ENCODE measurements at regions of chr4 and their contacts with region 1.

Region 1: DNA sequence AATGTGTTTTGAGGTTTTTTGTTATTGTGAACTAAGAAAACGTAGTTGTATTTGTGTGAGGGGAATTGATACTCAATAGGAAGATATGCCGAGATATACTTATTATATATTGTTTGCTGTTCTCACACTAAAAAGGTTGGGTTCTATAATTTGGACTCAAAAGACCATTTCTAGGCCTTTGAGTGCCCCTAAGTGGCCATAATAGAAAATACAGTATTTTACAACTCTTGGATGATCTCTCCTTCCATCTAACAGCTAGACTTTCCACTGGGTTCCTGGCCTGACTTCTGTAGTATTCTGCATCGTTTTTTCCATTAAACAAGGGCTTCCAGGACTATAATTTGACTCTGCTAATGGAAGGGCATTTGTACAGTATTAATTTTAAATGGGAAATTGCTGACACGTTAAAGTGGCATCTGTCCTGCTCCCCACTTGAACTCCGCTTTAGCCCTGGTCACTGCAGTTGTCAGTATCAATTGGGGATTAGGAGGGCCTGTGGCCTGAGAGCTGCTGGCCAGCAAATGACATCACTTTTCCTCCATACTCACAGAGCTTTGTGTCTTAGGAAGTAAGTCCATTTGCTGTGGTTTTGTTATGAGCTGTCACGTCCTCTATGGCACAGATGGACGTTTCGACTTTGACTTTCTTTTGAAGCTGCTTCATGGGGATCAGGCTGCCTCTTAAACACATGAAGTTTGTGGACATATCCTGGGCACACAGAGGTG is 176.9 kb downstream of the SLIT2 start:
- DNase-seq: no peak
- H3K4me3 ChIP-seq: no peak overlapping the region
- H3K27ac ChIP-seq: no peak overlapping the region
- H3K4me1 ChIP-seq: peaks cover 0 to 7% (median 2%) of the 10 kb centered on the region in 4 experiments; a peak in 2 of 7 replicates
- H3K27me3 ChIP-seq: no peaks in the 10 kb centered on the region
- CTCF ChIP-seq: peak in 2 of 3 experiments; percentile 15 to 30; a peak in 2 of 4 replicates
- EP300 ChIP-seq: no peak
- POLR2A ChIP-seq: no peak
- RAD21 ChIP-seq: peak; percentile 61 to 63

Region 2: GRCh38 chr4:20313237-20314030 is 115.2 kb before region 1 on chr4:
- CTCF ChIA-PET with region 1: interaction called, 13 read pairs
- POLR2A ChIA-PET with region 1: no interaction called
- DNase-seq: peak; percentile 53 to 80
- H3K4me3 ChIP-seq: no peak overlapping the region
- H3K27ac ChIP-seq: no peak overlapping the region
- H3K4me1 ChIP-seq: peaks cover 0 to 3% (median 0%) of the 10 kb centered on the region in 4 experiments; a peak in 1 of 7 replicates
- H3K27me3 ChIP-seq: no peaks in the 10 kb centered on the region
- CTCF ChIP-seq: peak; percentile 90 to 98 (median 96)
- EP300 ChIP-seq: no peak
- POLR2A ChIP-seq: no peak
- RAD21 ChIP-seq: peak; percentile 71 to 77

Region 3: GRCh38 chr4:20544645-20545044 is 116.0 kb after region 1 on chr4:
- CTCF ChIA-PET with region 1: interaction called, 15 read pairs
- POLR2A ChIA-PET with region 1: no interaction called
- DNase-seq: no peak
- H3K4me3 ChIP-seq: no peak overlapping the region
- H3K27ac ChIP-seq: no peak overlapping the region
- H3K4me1 ChIP-seq: no peaks in the 10 kb centered on the region
- H3K27me3 ChIP-seq: no peaks in the 10 kb centered on the region
- CTCF ChIP-seq: peak in 2 of 3 experiments; percentile 26 to 40; a peak in 2 of 4 replicates
- EP300 ChIP-seq: no peak
- POLR2A ChIP-seq: no peak
- RAD21 ChIP-seq: peak; percentile 73 to 78

Region 4: GRCh38 chr4:20684852-20685763 is 256.5 kb after region 1 on chr4:
- CTCF ChIA-PET with region 1: interaction called, 19 read pairs
- POLR2A ChIA-PET with region 1: no interaction called
- DNase-seq: no peak
- H3K4me3 ChIP-seq: no peak overlapping the region
- H3K27ac ChIP-seq: 0 out of 2 replicates have a peak overlapping the region, but pooled peaks have one; percentile 42
- H3K4me1 ChIP-seq: no peaks in the 10 kb centered on the region
- H3K27me3 ChIP-seq: no peaks in the 10 kb centered on the region
- CTCF ChIP-seq: peak in 2 of 3 experiments; percentile 27 to 38; a peak in 2 of 4 replicates
- EP300 ChIP-seq: no peak
- POLR2A ChIP-seq: no peak
- RAD21 ChIP-seq: peak; percentile 68 to 76